ENCODE measurements at regions of chr7 and their contacts with region 1.

Region 1: DNA sequence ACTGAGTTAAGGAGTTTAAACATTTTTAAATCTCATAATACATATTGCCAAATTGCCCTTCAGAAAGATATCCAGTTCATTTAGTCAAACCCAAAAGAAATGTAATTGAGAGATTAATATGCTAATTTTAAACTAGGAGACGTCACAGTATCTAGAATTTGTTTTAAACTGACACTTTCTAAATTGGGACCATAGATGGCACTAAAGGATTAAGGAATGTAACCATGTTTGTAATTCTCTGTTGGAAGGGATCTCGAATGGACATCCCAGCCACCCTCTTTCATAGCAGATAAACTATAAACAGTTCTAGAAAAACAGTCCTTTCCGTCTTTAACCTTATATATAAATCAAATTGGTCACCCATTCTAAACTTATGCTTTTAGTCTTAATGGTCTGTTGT is 30.0 kb upstream of the SAMD9L start:
- DNase-seq: no peak
- H3K4me3 Mint-ChIP-seq: no peak overlapping the region
- H3K27ac Mint-ChIP-seq: no peak overlapping the region
- H3K4me1 Mint-ChIP-seq: no peaks in the 10 kb centered on the region
- H3K27me3 Mint-ChIP-seq: peaks cover 64% of the 10 kb centered on the region
- CTCF ChIP-seq: peak; percentile 40

Region 2: DNA sequence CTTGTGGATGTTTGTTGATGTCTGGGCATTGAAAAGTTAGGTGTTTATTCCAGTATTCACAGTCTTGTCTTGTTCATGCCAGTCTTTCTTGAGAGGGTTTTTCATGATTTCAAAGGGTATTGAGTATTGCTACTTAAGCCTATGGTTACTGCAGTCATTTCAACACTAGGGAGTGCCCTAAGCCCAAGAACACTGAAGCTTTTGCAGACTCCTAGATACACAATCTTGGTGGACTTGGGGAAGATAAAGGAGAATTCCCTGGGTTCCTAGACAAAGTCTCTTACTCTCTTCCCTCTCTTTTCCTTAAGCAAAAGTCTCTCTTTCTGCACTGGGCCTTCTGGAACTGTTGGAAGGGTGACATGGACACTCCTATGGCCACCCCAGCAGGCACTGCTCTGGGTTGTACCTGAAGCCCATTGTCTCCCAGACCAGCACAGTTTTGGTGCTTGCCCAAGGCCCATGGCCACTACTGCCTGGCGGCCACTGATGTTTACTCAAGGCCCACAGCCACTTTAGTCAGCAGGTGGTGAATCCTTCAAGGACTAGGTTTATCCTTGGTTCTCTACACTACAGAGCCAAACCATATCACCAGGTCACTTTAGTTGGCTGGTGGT is 85.3 kb before region 1 on chr7:
- CTCF ChIA-PET with region 1: no interaction called
- POLR2A ChIA-PET with region 1: no interaction called
- intact Hi-C with region 1: loop called (anchors 10 kb)
- DNase-seq: peak; percentile 56
- H3K4me3 Mint-ChIP-seq: no peak overlapping the region
- H3K27ac Mint-ChIP-seq: no peak overlapping the region
- H3K4me1 Mint-ChIP-seq: no peaks in the 10 kb centered on the region
- H3K27me3 Mint-ChIP-seq: peaks cover 95% of the 10 kb centered on the region
- CTCF ChIP-seq: peak; percentile 72